Cardiac septum (tissue), 1 donor: ENCODE measurements at regions of chrX and their contacts with region 1.

Region 1: GRCh38 chrX:386768-387575 is at the start of gene PPP2R3B:
- DNase-seq: peak; percentile 100
- total RNA-seq, gene PPP2R3B: 128 TPM

Region 2: DNA sequence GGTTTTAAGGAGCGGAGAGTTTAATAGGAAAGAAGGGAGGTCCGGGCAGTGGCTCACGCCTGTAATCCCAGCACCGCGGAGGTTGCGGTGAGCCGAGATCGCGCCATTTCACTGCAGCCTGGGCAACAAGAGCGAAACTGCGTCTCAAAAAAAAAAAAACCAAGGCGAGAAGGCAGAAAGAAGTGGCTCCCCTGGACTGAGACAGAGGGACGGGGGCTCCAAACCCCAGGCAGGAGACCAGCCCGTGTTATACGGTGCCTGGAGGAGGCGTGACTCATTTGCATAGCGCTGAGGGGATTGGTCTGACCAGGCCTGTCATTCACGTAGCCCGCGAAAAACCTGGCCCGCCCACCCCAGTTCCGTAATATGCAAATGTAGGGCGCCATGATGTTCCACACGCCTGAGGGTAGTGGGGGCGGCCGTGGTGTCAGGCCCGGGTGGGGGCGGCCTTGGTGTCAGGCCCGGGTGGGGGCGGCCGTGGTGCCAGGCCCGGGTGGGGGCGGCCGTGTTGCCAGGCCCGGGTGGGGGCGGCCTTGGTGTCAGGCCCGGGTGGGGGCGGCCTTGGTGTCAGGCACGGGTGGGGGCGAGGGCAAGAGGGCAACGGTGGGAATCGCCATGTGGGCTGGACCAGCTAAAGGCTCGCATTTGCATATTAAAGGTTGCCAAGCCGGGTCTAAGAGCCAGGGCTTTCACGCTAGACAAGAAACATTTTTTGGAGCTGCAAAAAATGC is 103.7 kb before region 1 on chrX:
- intact Hi-C with region 1: loop called (anchors 5 kb)
- DNase-seq: peak; percentile 93

Region 3: GRCh38 chrX:318739-319578 is 68.0 kb before region 1 on chrX and contains the start of gene GTPBP6:
- intact Hi-C with region 1: loop called (anchors 5 kb)
- DNase-seq: peak; percentile 100
- total RNA-seq, gene GTPBP6: 35.3 TPM

Region 4: DNA sequence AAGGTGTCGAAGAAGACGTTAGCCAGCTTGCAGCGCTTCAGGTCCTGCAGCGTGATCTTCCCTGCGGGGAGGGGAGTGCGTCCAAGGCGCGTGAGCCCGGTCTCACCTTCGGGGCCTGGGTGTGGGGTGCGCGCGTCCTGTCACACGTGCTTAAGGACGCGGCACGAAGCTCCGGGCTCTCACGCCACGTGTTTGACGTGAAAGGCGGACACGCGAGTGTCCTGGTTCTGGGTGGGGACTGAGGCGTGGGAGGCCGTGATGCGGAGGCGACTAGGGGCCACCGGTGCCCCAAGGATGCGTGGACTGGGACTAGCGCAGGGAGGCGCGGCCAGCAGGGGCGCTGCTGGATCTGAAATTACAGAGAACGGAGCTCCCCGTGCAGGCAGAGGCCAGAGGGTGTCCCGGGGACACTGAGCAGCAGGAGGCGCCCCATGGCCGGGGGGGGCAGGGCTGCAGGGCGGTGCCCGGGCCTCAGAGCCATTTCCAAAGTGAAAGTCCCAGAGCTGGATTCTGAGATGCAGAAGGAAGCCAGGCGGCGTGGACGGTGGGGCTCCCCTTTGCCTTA is 48.1 kb before region 1 on chrX:
- intact Hi-C with region 1: no loop called
- DNase-seq: no peak